Pancreas (tissue), 10 donors: ENCODE measurements at regions of chr12 and their contacts with region 1.

Region 1: DNA sequence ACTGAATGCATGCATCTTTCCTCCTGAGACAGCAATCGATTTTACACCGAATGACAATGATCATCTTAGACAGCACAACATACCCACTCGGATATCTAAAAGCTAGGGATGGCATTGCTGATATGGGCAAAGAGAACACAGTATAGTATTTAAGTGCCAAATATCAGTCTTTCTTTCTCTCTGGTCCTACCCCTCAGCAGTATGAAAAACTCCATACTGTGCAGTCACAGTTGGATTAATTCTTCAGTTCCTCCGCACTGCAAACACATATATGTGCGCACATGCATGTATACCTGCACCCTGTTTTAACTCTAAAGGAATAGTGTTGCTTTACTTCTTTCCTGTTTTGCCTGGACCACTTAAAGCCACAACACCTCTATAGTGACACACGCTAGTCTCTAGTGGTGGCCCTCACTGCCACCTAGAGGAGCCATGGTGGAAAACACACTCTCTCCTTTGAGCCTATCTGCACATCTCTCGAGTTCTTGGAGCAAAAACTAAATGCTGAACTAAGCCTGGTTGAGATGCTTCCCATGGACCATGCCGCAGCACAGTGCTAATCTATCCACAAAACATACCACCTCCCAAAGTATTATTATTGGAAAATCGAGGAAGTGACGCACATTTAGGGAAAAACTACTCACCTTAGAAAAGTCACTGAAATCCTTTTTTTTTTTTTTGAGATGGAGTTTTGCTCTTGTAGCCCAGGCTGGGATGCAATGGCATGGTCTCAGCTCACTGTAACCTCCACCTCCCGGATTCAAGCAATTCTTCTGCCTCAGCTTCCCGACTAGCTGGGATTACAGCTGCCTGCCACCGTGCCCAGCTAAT is 11.9 kb downstream of the TMEM52B start:
- DNase-seq: peak in 3 of 6 donors; percentile 24 to 55 (median 38)
- ATAC-seq: peak; percentile 93 to 100 (median 96)
- H3K4me3 ChIP-seq: no peak overlapping the region
- H3K27ac ChIP-seq: no peak overlapping the region
- H3K4me1 ChIP-seq: no peaks in the 10 kb centered on the region
- H3K27me3 ChIP-seq: peaks cover 0 to 3% (median 0%) of the 10 kb centered on the region in 4 donors
- CTCF ChIP-seq: peak; percentile 17 to 55 (median 44)

Region 2: GRCh38 chr12:10158406-10158805 is 32.4 kb before region 1 on chr12:
- intact Hi-C with region 1: loop called in 1 of 3 experiments (anchors 5 kb)
- DNase-seq: no peak
- ATAC-seq: no peak
- H3K4me3 ChIP-seq: no peak overlapping the region
- H3K27ac ChIP-seq: no peak overlapping the region
- H3K4me1 ChIP-seq: peaks cover 0 to 5% (median 0%) of the 10 kb centered on the region in 3 donors
- H3K27me3 ChIP-seq: no peaks in the 10 kb centered on the region
- CTCF ChIP-seq: no peak

Region 3: DNA sequence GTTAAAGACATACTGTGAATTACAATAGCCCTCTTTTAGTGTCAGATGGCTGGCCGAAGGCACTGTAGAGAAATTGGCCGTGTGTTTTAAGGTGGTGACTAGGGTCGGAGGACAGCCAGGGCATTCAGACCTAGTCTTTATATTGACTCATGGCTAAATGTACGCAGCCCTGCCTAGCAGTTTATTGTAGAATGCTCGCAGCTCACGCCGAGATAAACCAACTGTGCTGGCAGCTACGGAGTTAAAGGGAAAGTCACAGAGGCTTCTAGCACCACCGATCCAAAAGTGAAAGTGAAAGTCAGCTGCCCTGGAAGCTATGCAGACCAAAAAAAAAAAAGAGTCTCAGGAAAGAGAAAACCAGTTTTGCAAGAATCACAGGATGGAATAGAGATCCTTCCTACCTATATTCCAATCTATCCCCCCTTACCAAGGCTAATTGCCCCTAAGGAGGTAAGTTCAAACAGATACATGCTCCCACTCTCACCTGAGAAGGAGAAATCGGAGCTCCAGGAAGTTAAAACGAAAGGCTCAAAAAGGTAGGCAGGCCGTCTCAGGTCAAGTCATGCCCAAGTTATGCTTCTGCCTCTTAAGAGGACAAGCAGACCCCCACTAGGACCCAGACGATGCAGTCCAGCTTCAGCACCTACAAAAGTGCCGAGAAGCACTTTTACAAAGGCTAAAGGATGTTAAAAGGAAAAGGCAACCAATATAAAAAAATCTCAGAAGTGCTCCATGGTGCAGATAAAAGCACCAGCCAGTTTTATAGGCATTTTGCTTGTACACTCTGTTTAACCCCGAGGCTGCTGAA is 174.2 kb after region 1 on chr12:
- intact Hi-C with region 1: no loop called
- DNase-seq: peak in 5 of 6 donors; percentile 41 to 85 (median 66)
- ATAC-seq: peak; percentile 84 to 89 (median 86)
- H3K4me3 ChIP-seq: peak overlapping the region; percentile 18 to 60 (median 33)
- H3K27ac ChIP-seq: peak overlapping the region; percentile 56 to 98 (median 86)
- H3K4me1 ChIP-seq: peaks cover 14 to 31% (median 18%) of the 10 kb centered on the region in 3 donors
- H3K27me3 ChIP-seq: no peaks in the 10 kb centered on the region
- CTCF ChIP-seq: no peak